Activated CD8-positive, alpha-beta T cell treated with anti-CD3 and anti-CD28 coated beads for 36 hours (primary cell): ENCODE measurements at regions of chr7 and their contacts with region 1.

Region 1: DNA sequence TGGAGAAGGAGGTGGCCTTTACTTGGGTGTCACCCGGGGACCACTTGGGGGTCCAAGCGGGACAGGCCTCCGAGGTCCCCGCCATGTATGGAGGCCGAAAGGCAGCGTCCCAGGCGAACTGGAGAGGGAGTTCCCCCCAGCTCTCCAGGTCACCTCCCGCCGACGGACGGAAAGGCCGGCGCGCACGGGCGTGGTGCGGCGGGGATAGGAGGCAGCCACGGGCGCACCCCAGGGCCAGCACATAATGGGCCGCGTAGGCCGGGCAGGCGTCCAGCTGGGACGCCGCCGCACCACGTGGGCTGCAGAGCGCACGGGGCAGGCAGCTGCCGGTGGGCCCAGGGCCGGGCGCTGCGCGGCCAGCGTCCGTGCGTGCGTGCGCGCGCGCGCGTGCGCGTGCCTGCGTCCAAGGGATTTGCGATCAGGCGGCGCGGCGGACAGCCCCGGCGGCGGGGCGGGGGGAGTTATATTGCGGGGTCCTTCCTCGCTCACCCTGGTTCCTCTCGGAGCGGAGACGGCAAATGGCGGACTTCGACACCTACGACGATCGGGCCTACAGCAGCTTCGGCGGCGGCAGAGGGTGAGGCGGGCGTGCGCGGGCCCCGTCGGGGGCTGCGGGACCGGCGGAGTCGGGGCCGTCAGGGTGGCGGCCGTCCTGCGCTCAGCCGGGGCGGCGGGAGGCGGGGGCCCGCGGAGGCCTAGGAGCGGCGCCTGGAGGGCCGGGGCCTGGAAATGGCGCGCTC is at the start of gene EIF4H:
- DNase-seq: peak; percentile 96
- ATAC-seq: peak; percentile 87
- H3K4me3 Mint-ChIP-seq: peak within 1 kb of the TSS; percentile 81
- H3K27ac Mint-ChIP-seq: peak within 1 kb of the TSS; percentile 94
- H3K4me1 Mint-ChIP-seq: peaks cover 35% of the 10 kb centered on the region
- H3K27me3 Mint-ChIP-seq: no peaks in the 10 kb centered on the region
- CTCF ChIP-seq: no peak
- total RNA-seq, gene EIF4H: 461 to 464 TPM

Region 2: GRCh38 chr7:74068393-74069085 is 105.5 kb before region 1 on chr7:
- CTCF ChIA-PET with region 1: interaction called, 13 read pairs
- POLR2A ChIA-PET with region 1: interaction called, 6 read pairs
- intact Hi-C with region 1: no loop called
- DNase-seq: no peak
- ATAC-seq: no peak
- H3K4me3 Mint-ChIP-seq: no peak overlapping the region
- H3K27ac Mint-ChIP-seq: no peak overlapping the region
- H3K4me1 Mint-ChIP-seq: no peaks in the 10 kb centered on the region
- H3K27me3 Mint-ChIP-seq: no peaks in the 10 kb centered on the region
- CTCF ChIP-seq: no peak

Region 3: GRCh38 chr7:74094224-74095101 is 79.6 kb before region 1 on chr7:
- CTCF ChIA-PET with region 1: interaction called, 3 read pairs
- POLR2A ChIA-PET with region 1: no interaction called
- intact Hi-C with region 1: loop called (anchors 5 kb)
- DNase-seq: peak; percentile 94
- ATAC-seq: peak; percentile 89
- H3K4me3 Mint-ChIP-seq: peak overlapping the region; percentile 76
- H3K27ac Mint-ChIP-seq: peak overlapping the region; percentile 98
- H3K4me1 Mint-ChIP-seq: peaks cover 28% of the 10 kb centered on the region
- H3K27me3 Mint-ChIP-seq: no peaks in the 10 kb centered on the region
- CTCF ChIP-seq: no peak

Region 4: GRCh38 chr7:74115326-74115725 is 58.7 kb before region 1 on chr7:
- CTCF ChIA-PET with region 1: no interaction called
- POLR2A ChIA-PET with region 1: no interaction called
- intact Hi-C with region 1: no loop called
- DNase-seq: no peak
- ATAC-seq: no peak
- H3K4me3 Mint-ChIP-seq: no peak overlapping the region
- H3K27ac Mint-ChIP-seq: no peak overlapping the region
- H3K4me1 Mint-ChIP-seq: no peaks in the 10 kb centered on the region
- H3K27me3 Mint-ChIP-seq: no peaks in the 10 kb centered on the region
- CTCF ChIP-seq: no peak

Region 5: DNA sequence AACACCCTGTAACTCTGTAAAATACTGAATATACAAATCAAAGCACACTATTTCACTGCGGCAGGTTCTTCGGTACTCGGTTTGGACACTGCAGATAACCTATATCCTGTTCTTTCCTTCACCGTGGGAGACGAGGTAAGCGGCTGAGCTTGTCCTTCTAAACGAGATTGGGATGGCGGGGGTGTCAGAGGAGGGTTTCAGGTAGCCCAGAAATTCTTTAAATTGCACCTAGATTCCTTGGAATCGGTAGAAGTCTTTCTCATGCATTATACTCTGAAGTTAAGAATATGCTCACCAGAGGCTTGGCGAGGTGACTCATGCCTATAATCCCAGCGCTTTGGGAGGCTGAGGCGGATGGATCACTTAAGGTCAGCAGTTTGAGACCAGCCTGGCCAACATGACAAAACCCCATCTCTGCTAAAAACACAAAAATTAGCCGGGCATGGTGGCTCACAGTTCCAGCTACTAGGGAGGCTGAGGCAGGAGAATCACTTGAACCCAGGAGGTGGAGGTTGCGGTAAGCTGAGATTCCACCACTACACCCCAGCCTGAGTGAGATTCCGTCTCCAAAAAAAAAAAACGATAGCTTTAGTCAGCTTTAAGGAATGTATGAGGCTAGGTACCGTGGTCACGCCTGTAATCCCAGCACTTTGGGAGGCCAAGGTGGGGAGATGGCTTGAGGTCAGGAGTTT is 25.7 kb after region 1 on chr7:
- CTCF ChIA-PET with region 1: interaction called, 3 read pairs
- POLR2A ChIA-PET with region 1: interaction called, 11 read pairs
- intact Hi-C with region 1: no loop called
- DNase-seq: no peak
- ATAC-seq: no peak
- H3K4me3 Mint-ChIP-seq: no peak overlapping the region
- H3K27ac Mint-ChIP-seq: peak overlapping the region; percentile 66
- H3K4me1 Mint-ChIP-seq: peaks cover 17% of the 10 kb centered on the region
- H3K27me3 Mint-ChIP-seq: no peaks in the 10 kb centered on the region
- CTCF ChIP-seq: no peak

Region 6: GRCh38 chr7:74275401-74275881 is 101.4 kb after region 1 on chr7:
- CTCF ChIA-PET with region 1: no interaction called
- POLR2A ChIA-PET with region 1: no interaction called
- intact Hi-C with region 1: no loop called
- DNase-seq: peak; percentile 19
- ATAC-seq: peak; percentile 56
- H3K4me3 Mint-ChIP-seq: no peak overlapping the region
- H3K27ac Mint-ChIP-seq: no peak overlapping the region
- H3K4me1 Mint-ChIP-seq: peaks cover 15% of the 10 kb centered on the region
- H3K27me3 Mint-ChIP-seq: no peaks in the 10 kb centered on the region
- CTCF ChIP-seq: peak; percentile 57